ENCODE measurements at regions of chr4 and their contacts with region 1.

Region 1: GRCh38 chr4:186169945-186170802 is 21.2 kb upstream of the CYP4V2 start:
- DNase-seq: no peak
- CTCF ChIP-seq: no peak

Region 2: GRCh38 chr4:186104114-186104889 is 65.9 kb before region 1 on chr4 and contains the start of gene FAM149A:
- CTCF ChIA-PET with region 1: no interaction called
- POLR2A ChIA-PET with region 1: no interaction called
- DNase-seq: peak; percentile 64
- CTCF ChIP-seq: no peak

Region 3: GRCh38 chr4:186190581-186191199 is 20.5 kb after region 1 on chr4:
- CTCF ChIA-PET with region 1: interaction called, 11 read pairs
- POLR2A ChIA-PET with region 1: no interaction called
- DNase-seq: peak; percentile 57
- CTCF ChIP-seq: peak; percentile 31

Region 4: GRCh38 chr4:186201535-186202230 is 31.5 kb after region 1 on chr4:
- CTCF ChIA-PET with region 1: no interaction called
- POLR2A ChIA-PET with region 1: no interaction called
- DNase-seq: peak; percentile 31
- CTCF ChIP-seq: peak; percentile 69

Measured in GM10248 (cell line).